K562 (cell line): ENCODE measurements at regions of chrX and their contacts with region 1.

Region 1: GRCh38 chrX:2261831-2262667 is 238.7 kb downstream of the DHRSX start:
- DNase-seq: no peak
- ATAC-seq: no peak
- H3K4me3 ChIP-seq: no peak overlapping the region
- H3K27ac ChIP-seq: no peak overlapping the region
- H3K4me1 ChIP-seq: peaks cover 0 to 8% of the 10 kb centered on the region in 2 experiments; a peak in 2 of 5 replicates
- H3K27me3 ChIP-seq: no peaks in the 10 kb centered on the region
- CTCF ChIP-seq: no peak
- EP300 ChIP-seq: no peak
- POLR2A ChIP-seq: no peak
- RAD21 ChIP-seq: no peak

Region 2: GRCh38 chrX:1925053-1925481 is 337.0 kb before region 1 on chrX:
- CTCF ChIA-PET with region 1: no interaction called
- POLR2A ChIA-PET with region 1: no interaction called
- in situ Hi-C with region 1: loop called (anchors 25 kb)
- intact Hi-C with region 1: no loop called
- DNase-seq: no peak
- ATAC-seq: no peak
- H3K4me3 ChIP-seq: no peak overlapping the region
- H3K27ac ChIP-seq: no peak overlapping the region
- H3K4me1 ChIP-seq: no peaks in the 10 kb centered on the region; a peak in 1 of 5 replicates
- H3K27me3 ChIP-seq: no peaks in the 10 kb centered on the region
- CTCF ChIP-seq: no peak
- EP300 ChIP-seq: no peak
- POLR2A ChIP-seq: no peak
- RAD21 ChIP-seq: no peak

Region 3: DNA sequence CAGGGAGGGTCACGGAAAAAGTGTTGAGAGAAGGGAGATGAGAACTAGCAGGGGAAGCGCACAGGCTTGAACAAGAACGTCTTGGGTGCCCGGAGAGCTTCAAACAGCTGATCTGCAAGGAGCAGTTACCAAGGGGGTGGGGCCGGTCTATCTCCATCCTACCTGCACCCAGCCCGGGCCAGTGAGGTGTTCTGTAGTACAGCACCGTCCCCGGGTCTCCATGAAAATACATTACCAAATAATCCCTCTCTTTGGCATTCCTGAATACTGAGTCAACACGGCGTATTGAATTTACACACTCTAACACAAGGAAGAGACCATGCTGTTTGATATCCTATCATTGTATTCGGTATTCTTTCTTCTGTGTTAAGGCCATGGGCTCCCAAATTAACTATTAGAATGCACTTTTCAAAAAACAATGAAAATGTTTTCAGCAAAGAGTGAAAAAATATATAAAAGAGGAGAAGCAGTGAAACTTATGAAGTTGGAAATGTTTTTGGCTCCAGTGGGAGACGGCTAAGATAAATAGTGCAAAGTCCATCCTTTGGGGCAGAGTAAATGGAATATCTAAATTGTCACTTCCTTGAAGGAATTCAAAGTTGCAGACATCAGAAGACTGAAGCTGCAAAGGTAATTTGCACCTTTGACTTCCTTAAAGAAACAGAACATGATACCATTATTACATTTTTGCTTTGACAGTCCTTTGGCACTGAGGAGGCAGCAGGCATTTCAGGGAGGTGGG is 148.4 kb after region 1 on chrX:
- CTCF ChIA-PET with region 1: no interaction called
- POLR2A ChIA-PET with region 1: no interaction called
- in situ Hi-C with region 1: no loop called
- intact Hi-C with region 1: no loop called
- DNase-seq: no peak
- ATAC-seq: no peak
- H3K4me3 ChIP-seq: no peak overlapping the region
- H3K27ac ChIP-seq: no peak overlapping the region
- H3K4me1 ChIP-seq: no peaks in the 10 kb centered on the region
- H3K27me3 ChIP-seq: no peaks in the 10 kb centered on the region
- CTCF ChIP-seq: no peak
- EP300 ChIP-seq: no peak
- POLR2A ChIP-seq: no peak
- RAD21 ChIP-seq: no peak